Uterus (tissue), 4 donors: ENCODE measurements at regions of chr5 and their contacts with region 1.

Region 1: GRCh38 chr5:38809388-38810359 is 36.1 kb upstream of the OSMR start:
- DNase-seq: peak; percentile 79 to 84
- H3K4me3 ChIP-seq: no peak overlapping the region
- H3K27ac ChIP-seq: peak overlapping the region; percentile 59 to 68
- H3K4me1 ChIP-seq: peaks cover 0 to 3% of the 10 kb centered on the region in 2 donors
- H3K27me3 ChIP-seq: no peaks in the 10 kb centered on the region
- CTCF ChIP-seq: peak; percentile 82 to 91 (median 86)
- POLR2A ChIP-seq: no peak

Region 2: DNA sequence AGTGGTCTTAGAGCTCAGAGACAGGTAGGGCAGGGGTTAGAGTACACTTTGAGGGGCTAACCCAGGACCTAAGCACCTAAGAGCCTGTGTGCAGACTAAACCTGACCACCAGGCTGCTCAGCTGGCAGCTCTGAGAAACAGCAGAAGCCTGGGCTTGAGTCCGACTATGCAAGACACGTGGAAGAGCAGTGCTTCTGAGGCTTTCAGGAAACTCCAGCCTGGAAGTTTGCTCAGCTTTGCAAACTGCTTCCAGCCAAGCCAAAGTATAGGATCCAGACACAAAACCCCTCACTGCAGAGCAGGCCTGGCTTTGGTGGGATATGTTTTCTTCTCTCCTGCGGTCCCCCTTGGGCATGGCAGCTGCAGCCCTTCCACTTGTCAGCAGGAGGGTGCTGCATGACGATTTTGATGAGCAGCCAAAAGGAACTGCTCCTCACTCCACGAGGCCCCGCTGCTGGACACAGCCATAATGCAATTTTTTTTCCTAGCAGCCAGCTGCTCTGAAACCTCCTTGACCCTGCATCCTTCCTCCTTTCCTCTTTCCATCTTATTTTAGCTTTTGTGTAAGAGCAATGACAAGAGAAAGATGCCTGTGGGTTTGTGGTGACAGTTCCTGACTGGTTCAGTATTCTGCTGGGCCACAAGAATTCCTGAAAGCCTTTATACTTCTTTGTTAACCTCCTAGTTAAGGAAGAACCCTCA is 376.4 kb before region 1 on chr5:
- intact Hi-C with region 1: loop called (anchors 10 kb)
- DNase-seq: peak; percentile 24 to 40
- H3K4me3 ChIP-seq: no peak overlapping the region
- H3K27ac ChIP-seq: peak overlapping the region; percentile 6 to 27
- H3K4me1 ChIP-seq: peaks cover 0 to 4% of the 10 kb centered on the region in 2 donors
- H3K27me3 ChIP-seq: no peaks in the 10 kb centered on the region
- CTCF ChIP-seq: no peak
- POLR2A ChIP-seq: no peak

Region 3: DNA sequence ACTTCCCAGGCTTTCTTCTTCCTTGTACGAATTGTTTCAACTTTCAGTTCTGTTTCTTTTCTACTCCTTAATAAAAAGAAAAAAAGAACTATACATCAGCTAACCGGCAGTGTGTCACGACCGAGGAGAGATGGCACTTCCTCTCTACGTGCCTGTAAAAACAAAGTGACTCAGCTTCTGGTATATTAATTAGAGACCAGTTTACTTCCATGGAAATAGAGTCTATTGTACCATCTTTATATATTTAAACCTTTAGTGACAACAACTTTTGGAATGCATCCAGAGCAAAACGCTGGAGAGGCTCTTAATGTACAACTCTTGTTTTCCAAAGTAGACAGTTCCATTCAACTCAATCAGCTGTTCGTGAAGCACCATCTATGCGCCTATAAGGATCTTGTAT is 158.7 kb before region 1 on chr5:
- intact Hi-C with region 1: loop called (anchors 10 kb)
- DNase-seq: no peak
- H3K4me3 ChIP-seq: no peak overlapping the region
- H3K27ac ChIP-seq: no peak overlapping the region
- H3K4me1 ChIP-seq: no peaks in the 10 kb centered on the region
- H3K27me3 ChIP-seq: no peaks in the 10 kb centered on the region
- CTCF ChIP-seq: no peak
- POLR2A ChIP-seq: no peak

Region 4: GRCh38 chr5:39100851-39101396 is 291.2 kb after region 1 on chr5:
- intact Hi-C with region 1: no loop called
- DNase-seq: no peak
- H3K4me3 ChIP-seq: no peak overlapping the region
- H3K27ac ChIP-seq: no peak overlapping the region
- H3K4me1 ChIP-seq: no peaks in the 10 kb centered on the region
- H3K27me3 ChIP-seq: no peaks in the 10 kb centered on the region
- CTCF ChIP-seq: no peak
- POLR2A ChIP-seq: no peak

Region 5: DNA sequence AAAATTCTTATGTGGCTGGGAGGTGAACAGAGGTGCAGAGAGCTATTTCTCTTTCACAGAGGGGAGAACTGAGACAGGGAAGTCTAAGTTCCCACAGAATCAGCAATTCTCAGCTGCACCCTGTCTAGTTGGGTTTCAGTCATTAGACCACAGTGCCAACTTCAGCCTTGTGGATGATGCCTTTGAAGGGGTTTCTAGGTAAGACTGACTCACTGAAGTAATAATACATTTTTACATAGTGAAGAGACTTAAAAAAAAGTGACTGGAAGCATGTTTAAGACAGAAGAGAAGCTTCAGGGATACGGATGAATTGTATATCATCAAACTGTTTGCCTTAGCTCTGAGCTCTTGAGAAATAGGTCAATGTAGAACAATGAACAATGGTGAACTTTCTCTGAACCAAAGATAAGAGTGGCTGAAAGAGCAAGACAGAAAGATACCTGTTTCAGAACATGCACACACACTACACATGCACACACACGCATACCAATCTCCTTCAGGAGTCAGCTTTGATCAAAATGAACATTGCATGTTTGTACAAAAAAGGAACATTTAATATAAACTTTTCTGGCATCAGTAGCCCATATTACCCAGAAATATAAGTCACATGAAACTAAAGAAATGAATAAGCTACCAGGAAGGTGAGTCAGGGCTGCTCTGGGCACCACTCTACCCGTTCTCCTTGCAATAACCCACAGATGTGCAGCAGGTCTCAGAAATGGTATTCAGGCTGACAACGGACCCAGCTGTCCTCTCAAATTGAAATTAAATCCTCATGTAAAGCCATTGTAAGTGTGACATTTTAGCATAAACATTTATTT is 422.2 kb after region 1 on chr5:
- intact Hi-C with region 1: no loop called
- DNase-seq: no peak
- H3K4me3 ChIP-seq: no peak overlapping the region
- H3K27ac ChIP-seq: no peak overlapping the region
- H3K4me1 ChIP-seq: no peaks in the 10 kb centered on the region
- H3K27me3 ChIP-seq: no peaks in the 10 kb centered on the region
- CTCF ChIP-seq: no peak
- POLR2A ChIP-seq: no peak